ENCODE measurements at regions of chr3 and their contacts with region 1.

Region 1: GRCh38 chr3:98166396-98166795 is at the start of gene OR5H15:
- DNase-seq: no peak
- ATAC-seq: no peak
- H3K4me3 ChIP-seq: no peak within 1 kb of the TSS
- H3K4me3 Mint-ChIP-seq: no peak within 1 kb of the TSS
- H3K27ac ChIP-seq: no peak within 1 kb of the TSS
- H3K27ac Mint-ChIP-seq: no peak within 1 kb of the TSS
- H3K4me1 ChIP-seq: no peaks in the 10 kb centered on the region
- H3K4me1 Mint-ChIP-seq: no peaks in the 10 kb centered on the region
- H3K27me3 ChIP-seq: peaks cover 0 to 3% of the 10 kb centered on the region in 2 donors
- H3K27me3 Mint-ChIP-seq: peaks cover 4 to 17% (median 7%) of the 10 kb centered on the region in 5 donors
- total RNA-seq, gene OR5H15: not detected

Region 2: DNA sequence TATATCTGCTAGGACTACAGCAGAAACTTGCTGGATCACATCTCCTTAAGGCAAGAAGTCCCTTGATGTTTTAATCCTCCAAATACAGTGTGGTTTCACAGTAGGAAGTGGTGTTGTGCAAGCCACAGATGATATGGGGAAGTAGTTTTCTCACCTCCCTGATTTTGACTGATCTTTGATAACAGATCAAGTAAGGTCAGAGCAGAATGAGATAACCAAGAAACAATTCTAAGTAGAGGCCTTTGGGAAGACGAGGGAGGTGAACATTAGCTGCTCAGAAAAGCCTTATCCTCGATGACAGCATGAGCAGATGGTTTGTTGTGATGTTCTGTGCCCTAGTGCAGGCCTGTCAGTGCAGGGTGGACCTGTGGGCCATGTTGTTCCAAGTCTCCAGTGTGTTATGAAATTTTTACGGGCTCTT is 255.5 kb before region 1 on chr3:
- CTCF ChIA-PET with region 1: no interaction called
- POLR2A ChIA-PET with region 1: no interaction called
- intact Hi-C with region 1: no loop called
- DNase-seq: peak in 6 of 9 donors; percentile 10 to 54 (median 32)
- ATAC-seq: peak; percentile 89
- H3K4me3 ChIP-seq: peak overlapping the region; percentile 2
- H3K4me3 Mint-ChIP-seq: peak overlapping the region in 9 of 10 donors; percentile 66 to 89 (median 84)
- H3K27ac ChIP-seq: peak overlapping the region; percentile 48
- H3K27ac Mint-ChIP-seq: peak overlapping the region; percentile 65 to 98 (median 95)
- H3K4me1 ChIP-seq: peaks cover 17 to 18% of the 10 kb centered on the region in 2 donors
- H3K4me1 Mint-ChIP-seq: peaks cover 15 to 30% (median 21%) of the 10 kb centered on the region in 7 donors
- H3K27me3 ChIP-seq: no peaks in the 10 kb centered on the region
- H3K27me3 Mint-ChIP-seq: no peaks in the 10 kb centered on the region

Region 3: DNA sequence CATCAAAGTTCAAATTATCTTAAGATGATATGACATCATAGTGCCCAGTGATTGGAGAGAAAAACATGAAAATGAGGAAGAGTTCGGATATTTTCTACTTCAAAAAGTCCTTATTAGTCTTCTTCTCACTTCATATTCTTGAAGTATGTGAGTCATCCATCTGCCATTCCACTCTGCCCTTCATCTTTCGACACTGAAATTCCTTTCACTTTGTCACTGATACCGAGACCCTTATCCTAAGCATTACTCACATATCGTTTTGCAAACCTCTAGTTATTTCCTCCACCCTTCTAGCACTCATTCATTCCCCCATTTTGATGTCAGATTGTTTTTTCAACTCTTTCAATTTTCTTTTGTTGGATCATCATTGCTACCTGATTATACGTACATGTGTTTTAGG is 15.2 kb before region 1 on chr3:
- CTCF ChIA-PET with region 1: no interaction called
- POLR2A ChIA-PET with region 1: no interaction called
- intact Hi-C with region 1: no loop called
- DNase-seq: no peak
- ATAC-seq: no peak
- H3K4me3 ChIP-seq: no peak overlapping the region
- H3K4me3 Mint-ChIP-seq: no peak overlapping the region
- H3K27ac ChIP-seq: no peak overlapping the region
- H3K27ac Mint-ChIP-seq: no peak overlapping the region
- H3K4me1 ChIP-seq: no peaks in the 10 kb centered on the region
- H3K4me1 Mint-ChIP-seq: no peaks in the 10 kb centered on the region
- H3K27me3 ChIP-seq: no peaks in the 10 kb centered on the region
- H3K27me3 Mint-ChIP-seq: peaks cover 0 to 8% (median 5%) of the 10 kb centered on the region in 5 donors

Region 4: GRCh38 chr3:98199020-98199419 is 32.6 kb after region 1 on chr3:
- CTCF ChIA-PET with region 1: no interaction called
- POLR2A ChIA-PET with region 1: no interaction called
- intact Hi-C with region 1: loop called in 1 of 2 experiments (anchors 1 kb)
- DNase-seq: no peak
- ATAC-seq: no peak
- H3K4me3 ChIP-seq: no peak overlapping the region
- H3K4me3 Mint-ChIP-seq: no peak overlapping the region
- H3K27ac ChIP-seq: no peak overlapping the region
- H3K27ac Mint-ChIP-seq: no peak overlapping the region
- H3K4me1 ChIP-seq: no peaks in the 10 kb centered on the region
- H3K4me1 Mint-ChIP-seq: no peaks in the 10 kb centered on the region
- H3K27me3 ChIP-seq: no peaks in the 10 kb centered on the region
- H3K27me3 Mint-ChIP-seq: peaks cover 0 to 5% (median 0%) of the 10 kb centered on the region in 5 donors

Region 5: GRCh38 chr3:98695796-98696195 is 529.4 kb after region 1 on chr3:
- CTCF ChIA-PET with region 1: no interaction called
- POLR2A ChIA-PET with region 1: no interaction called
- intact Hi-C with region 1: no loop called
- DNase-seq: no peak
- ATAC-seq: no peak
- H3K4me3 ChIP-seq: no peak overlapping the region
- H3K4me3 Mint-ChIP-seq: no peak overlapping the region
- H3K27ac ChIP-seq: no peak overlapping the region
- H3K27ac Mint-ChIP-seq: no peak overlapping the region
- H3K4me1 ChIP-seq: no peaks in the 10 kb centered on the region
- H3K4me1 Mint-ChIP-seq: no peaks in the 10 kb centered on the region
- H3K27me3 ChIP-seq: no peaks in the 10 kb centered on the region
- H3K27me3 Mint-ChIP-seq: peaks cover 0 to 5% (median 0%) of the 10 kb centered on the region in 5 donors

Measured in naive thymus-derived CD4-positive, alpha-beta T cell (primary cell).